AG04449 (cell line): ENCODE measurements at regions of chr7 and their contacts with region 1.

Region 1: GRCh38 chr7:74417419-74417971 is 36.2 kb upstream of the GTF2IRD1 start:
- DNase-seq: no peak
- H3K4me3 ChIP-seq: no peak overlapping the region
- CTCF ChIP-seq: peak; percentile 98

Region 2: DNA sequence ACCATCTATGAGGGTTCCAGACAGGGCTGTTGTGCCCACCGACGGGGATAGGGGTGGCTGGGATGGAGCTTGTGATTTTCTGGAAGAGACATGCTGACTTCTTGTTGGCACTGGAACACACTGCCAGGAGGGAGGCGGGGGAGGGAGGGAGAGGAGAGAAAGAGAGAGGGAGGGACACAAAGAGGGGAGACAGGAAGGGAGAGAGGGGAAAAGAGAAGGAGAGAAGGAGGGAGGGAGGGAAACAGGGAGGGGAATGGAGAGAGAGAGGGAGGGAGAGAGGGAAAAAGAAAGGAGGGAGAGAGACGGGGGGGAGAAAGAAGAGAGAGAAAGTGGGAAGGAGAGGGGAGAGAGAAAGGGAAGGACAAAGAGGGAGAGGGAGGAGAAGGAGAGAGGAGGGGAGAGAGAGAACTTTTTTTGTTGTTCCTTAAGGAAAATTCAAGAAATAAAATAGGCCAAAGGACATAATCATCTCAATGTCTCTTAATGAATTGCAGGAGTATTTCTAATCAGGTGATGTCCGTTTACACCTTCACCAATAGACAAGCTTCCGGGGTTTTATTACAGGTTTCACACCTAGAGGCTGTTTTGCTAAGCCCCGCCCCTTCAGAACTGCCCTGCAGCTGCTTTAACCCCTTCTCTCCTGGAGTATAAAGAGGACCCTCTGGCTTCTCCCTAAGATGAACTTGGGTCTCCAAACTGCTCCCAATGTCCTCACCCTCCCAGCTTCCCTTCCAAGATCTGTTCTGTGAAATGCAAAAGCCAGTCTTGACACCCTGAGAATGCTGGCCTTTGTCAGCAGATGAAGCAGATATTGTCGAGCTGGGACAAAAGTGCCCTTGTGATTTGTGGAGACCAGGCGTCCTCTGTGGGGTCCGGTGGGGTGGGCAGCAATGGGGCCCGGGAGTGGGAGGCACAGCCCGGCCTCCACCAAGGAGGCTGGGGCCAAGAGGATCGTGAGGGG is 45.8 kb before region 1 on chr7:
- CTCF ChIA-PET with region 1: no interaction called
- POLR2A ChIA-PET with region 1: no interaction called
- DNase-seq: no peak
- H3K4me3 ChIP-seq: no peak overlapping the region
- CTCF ChIP-seq: no peak

Region 3: GRCh38 chr7:74387606-74388005 is 29.9 kb before region 1 on chr7:
- CTCF ChIA-PET with region 1: no interaction called
- POLR2A ChIA-PET with region 1: no interaction called
- DNase-seq: no peak
- H3K4me3 ChIP-seq: no peak overlapping the region
- CTCF ChIP-seq: no peak

Region 4: DNA sequence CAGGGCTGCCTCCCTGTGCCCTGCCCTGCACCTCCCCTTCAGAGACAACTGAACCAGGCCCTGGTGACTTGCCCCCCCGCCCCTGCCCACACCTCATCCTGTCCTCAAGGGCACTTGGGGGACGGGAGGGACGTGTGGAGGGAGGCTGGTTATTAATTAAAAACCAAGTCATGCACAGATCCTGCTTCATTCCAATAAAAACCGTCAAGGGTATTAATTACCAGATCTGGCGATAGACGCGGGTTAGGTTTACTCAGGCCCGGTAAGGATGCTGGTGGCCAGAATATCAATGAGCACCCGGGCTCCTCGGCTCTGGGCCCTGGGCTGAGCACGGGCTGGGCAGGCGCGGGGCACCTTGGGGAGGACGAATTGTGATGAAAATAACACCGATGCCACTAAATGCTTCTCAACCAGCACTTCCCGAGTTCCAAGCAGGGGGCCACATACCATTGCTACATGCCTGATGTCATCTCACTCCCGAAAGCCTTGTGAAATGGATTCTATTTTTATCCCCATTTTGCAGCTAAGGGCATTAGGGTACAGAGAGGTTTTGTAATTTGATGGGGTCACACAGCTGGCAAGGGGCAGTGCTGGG is 11.8 kb after region 1 on chr7:
- CTCF ChIA-PET with region 1: interaction called, 17 read pairs
- POLR2A ChIA-PET with region 1: no interaction called
- DNase-seq: peak; percentile 53
- H3K4me3 ChIP-seq: no peak overlapping the region
- CTCF ChIP-seq: no peak

Region 5: GRCh38 chr7:74449809-74450397 is 32.4 kb after region 1 on chr7:
- CTCF ChIA-PET with region 1: interaction called, 10 read pairs
- POLR2A ChIA-PET with region 1: no interaction called
- DNase-seq: no peak
- H3K4me3 ChIP-seq: no peak overlapping the region
- CTCF ChIP-seq: peak; percentile 73

Region 6: DNA sequence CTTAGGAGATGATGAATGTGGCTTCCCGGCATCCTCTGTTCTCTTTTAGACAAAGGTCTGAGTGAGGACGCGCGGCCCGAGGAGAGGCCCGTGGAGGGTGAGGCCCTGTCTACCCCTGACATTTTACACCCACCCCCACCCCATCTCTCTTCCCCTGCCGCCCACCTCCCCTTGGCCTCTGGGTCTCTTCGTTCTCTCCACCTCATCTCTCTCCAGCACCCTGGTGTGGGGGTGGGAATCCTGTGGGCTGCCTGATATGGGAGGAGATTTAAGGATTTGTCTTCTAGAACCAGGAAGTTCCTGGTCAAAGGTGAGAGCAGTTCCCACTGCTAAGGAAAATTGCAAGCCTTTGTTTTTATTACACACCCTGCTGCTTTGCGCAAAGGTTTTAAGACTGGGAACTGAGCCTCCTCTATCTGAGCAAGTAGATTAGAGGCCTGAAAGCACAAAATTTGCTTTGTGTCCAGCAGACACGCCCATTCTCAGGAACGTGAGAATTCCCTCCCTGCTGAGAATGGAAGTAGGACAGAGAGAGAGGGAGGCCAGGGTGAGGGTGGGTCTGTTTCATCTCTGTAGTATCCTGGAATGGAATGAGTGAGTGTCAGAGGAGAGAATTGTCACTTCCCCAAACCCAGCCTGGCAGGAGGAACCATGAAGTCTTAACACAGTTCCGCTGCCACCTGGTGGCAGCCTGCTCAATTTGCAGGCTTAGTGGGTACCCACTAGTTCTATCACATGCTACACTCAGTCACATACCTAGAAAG is 127.4 kb after region 1 on chr7:
- CTCF ChIA-PET with region 1: interaction called, 20 read pairs
- POLR2A ChIA-PET with region 1: no interaction called
- DNase-seq: no peak
- H3K4me3 ChIP-seq: no peak overlapping the region
- CTCF ChIP-seq: peak; percentile 25